H1 (cell line): ENCODE measurements at regions of chr10 and their contacts with region 1.

Region 1: GRCh38 chr10:70880077-70880534 is 8.3 kb downstream of the PCBD1 start:
- DNase-seq: peak in 1 of 2 experiments; percentile 70
- H3K4me3 ChIP-seq: no peak overlapping the region
- H3K27ac ChIP-seq: no peak overlapping the region
- H3K4me1 ChIP-seq: peaks cover 0 to 7% (median 2%) of the 10 kb centered on the region in 4 experiments; a peak in 3 of 7 replicates
- H3K27me3 ChIP-seq: no peaks in the 10 kb centered on the region
- CTCF ChIP-seq: peak; percentile 70 to 87 (median 77)
- EP300 ChIP-seq: no peak
- POLR2A ChIP-seq: no peak
- RAD21 ChIP-seq: peak; percentile 88 to 93

Region 2: DNA sequence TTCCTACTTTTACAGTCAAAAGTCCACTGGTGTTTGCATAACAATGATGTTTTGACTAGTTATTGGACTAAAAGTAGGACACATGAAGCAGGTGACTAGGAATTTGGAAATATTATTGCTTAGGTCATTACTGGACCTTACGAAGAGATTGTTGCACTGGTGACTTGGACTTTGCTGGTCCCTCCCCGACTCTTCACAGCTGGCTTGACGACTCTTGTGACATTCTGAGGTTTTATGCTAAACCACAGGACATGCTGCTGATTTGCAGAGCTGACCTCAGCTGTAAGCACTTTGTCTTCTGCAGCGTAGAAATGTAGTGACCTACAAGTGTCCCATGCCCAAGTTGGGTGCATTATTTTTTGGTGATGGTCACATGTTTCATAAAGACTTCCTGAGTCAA is 13.7 kb before region 1 on chr10:
- CTCF ChIA-PET with region 1: interaction called, 19 read pairs
- POLR2A ChIA-PET with region 1: interaction called, 5 read pairs
- DNase-seq: no peak
- H3K4me3 ChIP-seq: no peak overlapping the region
- H3K27ac ChIP-seq: no peak overlapping the region
- H3K4me1 ChIP-seq: no peaks in the 10 kb centered on the region
- H3K27me3 ChIP-seq: no peaks in the 10 kb centered on the region
- CTCF ChIP-seq: no peak
- EP300 ChIP-seq: no peak
- POLR2A ChIP-seq: no peak
- RAD21 ChIP-seq: no peak

Region 3: GRCh38 chr10:71015674-71016073 is 135.6 kb after region 1 on chr10:
- CTCF ChIA-PET with region 1: no interaction called
- POLR2A ChIA-PET with region 1: no interaction called
- DNase-seq: no peak
- H3K4me3 ChIP-seq: no peak overlapping the region
- H3K27ac ChIP-seq: no peak overlapping the region
- H3K4me1 ChIP-seq: no peaks in the 10 kb centered on the region
- H3K27me3 ChIP-seq: no peaks in the 10 kb centered on the region
- CTCF ChIP-seq: no peak
- EP300 ChIP-seq: no peak
- POLR2A ChIP-seq: no peak
- RAD21 ChIP-seq: no peak